Activated B cell treated with CpG ODN at 0.5 μM for 24 hours (primary cell): ENCODE measurements at regions of chr9 and their contacts with region 1.

Region 1: DNA sequence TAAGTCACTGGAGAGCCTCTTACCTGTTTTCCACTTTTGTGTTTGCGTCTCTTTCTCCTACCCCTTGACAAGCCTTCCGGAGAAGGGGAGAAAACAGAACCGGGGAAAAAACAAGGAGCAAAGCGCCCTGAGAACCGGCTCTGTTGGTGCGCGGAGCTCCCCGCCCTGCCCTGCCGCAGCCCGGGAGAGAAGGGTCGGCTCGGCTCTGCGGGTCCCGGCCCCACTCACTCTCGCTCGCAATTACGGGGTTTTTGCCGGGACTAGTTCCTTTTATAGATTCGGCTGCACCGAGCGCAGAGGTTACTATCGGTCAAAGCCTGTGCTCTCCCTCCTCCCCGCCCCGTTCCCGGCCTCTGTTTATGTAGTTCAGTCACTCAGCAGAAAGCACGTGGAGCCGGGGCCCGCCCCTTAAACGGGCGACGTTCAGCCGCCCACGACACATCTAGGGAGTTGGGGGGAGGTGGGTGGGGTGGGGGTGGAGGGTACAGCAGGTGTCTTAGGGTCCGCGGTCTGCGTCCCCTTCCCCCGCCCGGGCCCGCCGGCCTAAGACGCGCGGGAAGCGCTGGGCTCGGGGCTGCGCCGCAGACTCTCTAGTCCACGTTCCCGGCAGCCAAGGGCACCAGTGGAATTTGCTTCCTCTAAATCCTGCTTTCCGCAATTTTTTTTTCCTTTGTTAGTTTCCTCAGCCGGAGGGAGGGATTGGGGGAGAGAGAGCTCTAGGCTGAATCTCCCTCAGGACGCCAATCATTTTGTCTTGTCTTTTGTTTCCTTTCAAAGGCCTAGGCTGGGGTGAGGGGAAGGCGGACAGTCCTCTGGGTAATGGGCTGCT is at the start of gene ABCA1:
- DNase-seq: peak; percentile 64
- ATAC-seq: peak; percentile 73
- H3K4me3 Mint-ChIP-seq: peak within 1 kb of the TSS; percentile 93
- H3K27ac Mint-ChIP-seq: peak within 1 kb of the TSS; percentile 68
- H3K4me1 Mint-ChIP-seq: peaks cover 42% of the 10 kb centered on the region
- H3K27me3 Mint-ChIP-seq: no peaks in the 10 kb centered on the region
- CTCF ChIP-seq: no peak
- total RNA-seq, gene ABCA1: 1.7 and 2.3 TPM in 2 replicates

Region 2: GRCh38 chr9:104780799-104781395 is 147.2 kb before region 1 on chr9:
- CTCF ChIA-PET with region 1: interaction called, 3 read pairs
- POLR2A ChIA-PET with region 1: no interaction called
- intact Hi-C with region 1: loop called (anchors 1 kb)
- DNase-seq: no peak
- ATAC-seq: peak; percentile 47
- H3K4me3 Mint-ChIP-seq: no peak overlapping the region
- H3K27ac Mint-ChIP-seq: peak overlapping the region; percentile 65
- H3K4me1 Mint-ChIP-seq: peaks cover 34% of the 10 kb centered on the region
- H3K27me3 Mint-ChIP-seq: no peaks in the 10 kb centered on the region
- CTCF ChIP-seq: peak; percentile 27

Region 3: DNA sequence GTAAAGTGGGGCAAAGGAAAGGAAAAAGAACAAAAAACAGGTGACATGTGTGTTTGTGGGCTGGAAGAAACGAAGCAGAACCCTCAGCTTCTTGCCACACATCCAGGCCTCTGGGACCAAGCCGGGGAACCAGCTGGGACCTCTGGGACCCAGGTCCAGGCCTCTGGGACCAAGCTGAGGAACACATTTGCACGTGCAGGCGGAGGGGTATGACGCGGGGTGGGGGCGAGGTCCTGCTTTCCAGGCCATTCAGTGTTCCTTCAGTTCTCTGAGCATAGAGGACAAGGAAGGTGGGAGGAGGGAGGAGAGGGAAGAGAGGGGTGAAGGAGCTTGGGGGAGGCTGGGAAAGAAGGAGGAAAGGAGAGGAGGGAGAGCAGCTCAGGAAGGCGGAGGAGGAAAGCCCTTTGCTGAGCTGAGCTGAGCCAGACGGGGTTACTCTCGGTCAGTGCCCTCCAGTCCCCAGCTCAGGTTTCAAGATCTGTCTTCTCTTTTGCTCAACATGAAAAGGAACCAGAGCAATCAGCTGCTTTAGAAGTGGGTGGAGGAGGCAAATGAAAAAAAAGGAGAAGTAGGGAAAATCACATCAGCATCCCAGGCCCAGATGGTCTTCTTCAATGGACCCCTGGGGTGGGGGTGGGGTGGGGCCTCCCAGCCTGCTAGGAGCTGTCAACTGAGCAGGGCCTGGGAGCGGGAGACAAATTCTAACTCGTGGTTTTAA is 59.3 kb before region 1 on chr9:
- CTCF ChIA-PET with region 1: interaction called, 8 read pairs
- POLR2A ChIA-PET with region 1: interaction called, 12 read pairs
- intact Hi-C with region 1: loop called (anchors 1 kb)
- DNase-seq: peak; percentile 26
- ATAC-seq: peak; percentile 93
- H3K4me3 Mint-ChIP-seq: peak overlapping the region; percentile 65
- H3K27ac Mint-ChIP-seq: peak overlapping the region; percentile 43
- H3K4me1 Mint-ChIP-seq: peaks cover 33% of the 10 kb centered on the region
- H3K27me3 Mint-ChIP-seq: no peaks in the 10 kb centered on the region
- CTCF ChIP-seq: no peak

Region 4: GRCh38 chr9:104991144-104991953 is 63.2 kb after region 1 on chr9:
- CTCF ChIA-PET with region 1: interaction called, 3 read pairs
- POLR2A ChIA-PET with region 1: interaction called, 15 read pairs
- intact Hi-C with region 1: loop called (anchors 1 kb)
- DNase-seq: peak; percentile 69
- ATAC-seq: peak; percentile 80
- H3K4me3 Mint-ChIP-seq: peak overlapping the region; percentile 86
- H3K27ac Mint-ChIP-seq: peak overlapping the region; percentile 69
- H3K4me1 Mint-ChIP-seq: peaks cover 33% of the 10 kb centered on the region
- H3K27me3 Mint-ChIP-seq: peaks cover 2% of the 10 kb centered on the region
- CTCF ChIP-seq: no peak

Region 5: GRCh38 chr9:105414947-105415661 is 487.0 kb after region 1 on chr9:
- CTCF ChIA-PET with region 1: no interaction called
- POLR2A ChIA-PET with region 1: no interaction called
- intact Hi-C with region 1: loop called (anchors 1 kb)
- DNase-seq: peak; percentile 18
- ATAC-seq: peak; percentile 85
- H3K4me3 Mint-ChIP-seq: no peak overlapping the region
- H3K27ac Mint-ChIP-seq: no peak overlapping the region
- H3K4me1 Mint-ChIP-seq: peaks cover 4% of the 10 kb centered on the region
- H3K27me3 Mint-ChIP-seq: no peaks in the 10 kb centered on the region
- CTCF ChIP-seq: no peak

Region 6: DNA sequence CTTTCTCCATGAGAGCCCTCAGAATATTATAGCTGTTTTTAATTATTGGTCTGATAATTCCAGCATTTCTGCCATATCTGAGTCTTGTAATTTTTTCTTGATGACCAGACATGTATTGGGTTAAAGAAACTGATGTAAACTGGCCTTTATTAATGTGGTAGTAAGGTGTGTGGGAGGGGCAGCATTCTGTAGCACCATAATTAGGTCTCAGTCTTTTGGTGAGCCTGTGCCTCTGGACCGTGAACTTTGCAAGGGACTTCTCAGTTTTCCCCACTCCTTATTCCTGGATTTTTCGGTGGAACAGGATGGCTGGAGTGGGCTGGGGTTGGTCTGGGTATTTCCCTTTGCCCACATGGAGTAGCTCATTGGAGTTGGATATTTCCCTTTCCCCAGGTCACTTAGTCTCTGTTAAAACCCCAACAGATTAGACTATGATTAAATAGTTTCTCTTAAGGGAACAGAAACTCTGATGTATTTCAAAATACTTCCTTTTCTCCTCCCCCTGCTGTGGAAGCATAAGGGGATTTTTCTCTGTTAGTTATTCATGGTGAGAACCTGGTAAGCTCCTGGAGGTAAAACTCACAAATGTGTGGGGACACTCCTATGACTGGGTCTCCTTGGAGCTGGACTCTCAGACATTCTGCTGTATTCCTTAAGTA is 572.1 kb after region 1 on chr9:
- CTCF ChIA-PET with region 1: no interaction called
- POLR2A ChIA-PET with region 1: no interaction called
- intact Hi-C with region 1: loop called (anchors 5 kb)
- DNase-seq: peak; percentile 34
- ATAC-seq: peak; percentile 88
- H3K4me3 Mint-ChIP-seq: peak overlapping the region; percentile 78
- H3K27ac Mint-ChIP-seq: peak overlapping the region; percentile 96
- H3K4me1 Mint-ChIP-seq: peaks cover 26% of the 10 kb centered on the region
- H3K27me3 Mint-ChIP-seq: no peaks in the 10 kb centered on the region
- CTCF ChIP-seq: no peak